Heart right ventricle (tissue), 16 donors: ENCODE measurements at regions of chr9 and their contacts with region 1.

Region 1: DNA sequence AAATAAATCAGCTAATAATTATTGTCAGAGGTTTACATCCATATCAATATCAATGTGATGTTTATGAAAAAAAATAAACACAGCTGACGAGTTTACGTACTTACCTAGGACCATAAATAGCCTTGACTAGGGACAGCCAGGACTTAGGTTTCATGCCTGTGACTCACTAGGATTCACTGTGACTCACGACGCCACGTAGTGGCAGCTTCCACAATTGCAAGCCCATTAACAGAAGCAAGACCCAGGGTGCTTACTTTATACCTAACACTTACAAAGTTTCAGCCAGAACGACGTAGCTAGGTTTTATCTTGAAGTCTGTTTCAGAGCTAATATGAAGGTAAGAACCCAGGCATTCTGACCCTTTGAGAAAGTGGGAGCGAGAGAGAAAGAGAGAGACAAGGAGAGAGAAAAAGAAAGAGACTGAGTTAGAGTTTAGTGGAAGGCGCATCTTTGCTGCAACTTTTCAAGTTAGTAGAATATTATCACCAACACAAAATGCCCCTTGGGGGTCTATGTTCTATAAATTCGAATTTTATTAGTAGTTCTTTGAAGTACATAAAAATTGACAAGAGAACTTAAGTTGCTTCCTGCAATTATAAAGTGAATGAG is 191.2 kb downstream of the GNA14 start:
- DNase-seq: peak; percentile 79 to 80
- ATAC-seq: peak; percentile 68 to 90 (median 84)
- H3K4me3 ChIP-seq: no peak overlapping the region
- H3K27ac ChIP-seq: no peak overlapping the region
- H3K4me1 ChIP-seq: peaks cover 0 to 17% (median 4%) of the 10 kb centered on the region in 9 donors
- H3K27me3 ChIP-seq: no peaks in the 10 kb centered on the region
- CTCF ChIP-seq: peak; percentile 74 to 96 (median 86)

Region 2: GRCh38 chr9:77598524-77598923 is 141.6 kb after region 1 on chr9:
- intact Hi-C with region 1: loop called in 1 of 10 experiments (anchors 5 kb)
- DNase-seq: peak in 1 of 2 donors; percentile 65
- ATAC-seq: peak; percentile 67 to 89 (median 76)
- H3K4me3 ChIP-seq: no peak overlapping the region
- H3K27ac ChIP-seq: peak overlapping the region in 8 of 10 donors; percentile 21 to 71 (median 58)
- H3K4me1 ChIP-seq: peaks cover 3 to 61% (median 45%) of the 10 kb centered on the region in 9 donors
- H3K27me3 ChIP-seq: no peaks in the 10 kb centered on the region
- CTCF ChIP-seq: no peak

Region 3: GRCh38 chr9:77743386-77743785 is 286.5 kb after region 1 on chr9:
- intact Hi-C with region 1: loop called in 1 of 10 experiments (anchors 5 kb)
- DNase-seq: no peak
- ATAC-seq: no peak
- H3K4me3 ChIP-seq: no peak overlapping the region
- H3K27ac ChIP-seq: no peak overlapping the region
- H3K4me1 ChIP-seq: peaks cover 0 to 15% (median 3%) of the 10 kb centered on the region in 9 donors
- H3K27me3 ChIP-seq: no peaks in the 10 kb centered on the region
- CTCF ChIP-seq: no peak

Region 4: GRCh38 chr9:77751341-77752091 is 294.6 kb after region 1 on chr9:
- intact Hi-C with region 1: loop called in 7 of 10 experiments (anchors 1 to 10 kb)
- DNase-seq: peak in 1 of 2 donors; percentile 61
- ATAC-seq: peak in 7 of 8 donors; percentile 63 to 93 (median 77)
- H3K4me3 ChIP-seq: no peak overlapping the region
- H3K27ac ChIP-seq: peak overlapping the region in 4 of 10 donors; percentile 5 to 37 (median 12)
- H3K4me1 ChIP-seq: peaks cover 0 to 22% (median 10%) of the 10 kb centered on the region in 9 donors
- H3K27me3 ChIP-seq: no peaks in the 10 kb centered on the region
- CTCF ChIP-seq: peak; percentile 24 to 72 (median 53)

Region 5: DNA sequence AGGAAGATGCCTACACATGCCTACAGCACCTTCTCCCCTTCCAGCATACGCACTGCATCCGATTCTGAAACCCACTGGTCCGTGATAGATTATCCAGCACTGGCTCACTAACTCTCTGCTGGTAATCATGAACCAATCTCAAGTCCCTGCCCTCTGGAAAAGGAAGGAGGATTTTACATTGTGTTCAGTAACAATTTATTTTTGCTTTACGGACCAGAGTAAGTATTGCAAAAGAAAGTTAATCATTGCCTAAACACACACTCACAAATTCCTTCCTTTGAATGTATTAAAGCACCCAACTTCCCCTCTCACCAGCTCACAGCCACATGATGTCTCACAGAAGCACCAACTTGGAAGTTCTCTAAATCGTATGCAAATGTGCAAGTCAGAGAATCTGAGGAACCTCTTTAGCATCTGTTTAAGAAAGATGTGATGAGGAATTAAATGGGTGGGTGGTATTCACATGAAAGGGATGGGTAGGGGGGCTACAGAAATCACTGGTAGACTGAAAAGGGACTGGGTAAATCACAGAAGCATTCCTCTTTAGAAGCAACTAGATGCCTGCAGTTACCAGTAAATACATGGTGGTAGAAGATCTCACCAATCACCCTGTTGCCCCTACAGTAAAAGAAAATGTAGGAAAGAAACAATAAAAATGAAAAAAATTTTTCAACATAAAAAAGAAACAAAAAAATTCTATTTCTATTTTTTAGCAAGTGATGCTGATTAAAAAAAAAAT is 566.2 kb after region 1 on chr9:
- intact Hi-C with region 1: loop called in 1 of 10 experiments (anchors 10 kb)
- DNase-seq: no peak
- ATAC-seq: peak in 6 of 8 donors; percentile 43 to 74 (median 56)
- H3K4me3 ChIP-seq: peak overlapping the region in 4 of 10 donors; percentile 3 to 34 (median 14)
- H3K27ac ChIP-seq: peak overlapping the region in 6 of 10 donors; percentile 47 to 76 (median 70)
- H3K4me1 ChIP-seq: peaks cover 2 to 90% (median 61%) of the 10 kb centered on the region in 9 donors
- H3K27me3 ChIP-seq: no peaks in the 10 kb centered on the region
- CTCF ChIP-seq: no peak

Region 6: DNA sequence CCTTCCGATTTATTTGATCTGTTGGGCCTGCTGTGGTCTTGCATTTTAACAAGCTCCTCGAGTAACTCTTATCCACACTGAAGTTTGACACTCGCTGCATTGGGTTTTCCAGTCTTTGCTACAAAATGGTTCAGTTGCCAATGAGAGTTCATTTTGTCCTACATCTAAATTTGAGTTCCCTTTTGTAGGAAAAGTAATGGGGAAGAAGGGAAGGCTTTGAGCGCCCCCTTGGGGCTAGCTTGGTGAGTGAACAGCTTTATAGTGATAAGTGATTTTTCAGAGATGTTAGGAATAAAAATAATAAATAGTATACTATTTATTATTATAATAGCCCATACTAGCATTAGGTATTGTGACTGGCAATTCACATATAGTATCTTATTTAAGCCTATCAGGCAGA is 664.6 kb after region 1 on chr9:
- intact Hi-C with region 1: loop called in 2 of 10 experiments (anchors 10 kb)
- DNase-seq: peak; percentile 44 to 57
- ATAC-seq: no peak
- H3K4me3 ChIP-seq: no peak overlapping the region
- H3K27ac ChIP-seq: no peak overlapping the region
- H3K4me1 ChIP-seq: peaks cover 0 to 26% (median 0%) of the 10 kb centered on the region in 9 donors
- H3K27me3 ChIP-seq: peaks cover 0 to 11% (median 0%) of the 10 kb centered on the region in 7 donors
- CTCF ChIP-seq: peak in 8 of 9 donors; percentile 8 to 75 (median 60)